ENCODE measurements at regions of chr13 and their contacts with region 1.

Region 1: DNA sequence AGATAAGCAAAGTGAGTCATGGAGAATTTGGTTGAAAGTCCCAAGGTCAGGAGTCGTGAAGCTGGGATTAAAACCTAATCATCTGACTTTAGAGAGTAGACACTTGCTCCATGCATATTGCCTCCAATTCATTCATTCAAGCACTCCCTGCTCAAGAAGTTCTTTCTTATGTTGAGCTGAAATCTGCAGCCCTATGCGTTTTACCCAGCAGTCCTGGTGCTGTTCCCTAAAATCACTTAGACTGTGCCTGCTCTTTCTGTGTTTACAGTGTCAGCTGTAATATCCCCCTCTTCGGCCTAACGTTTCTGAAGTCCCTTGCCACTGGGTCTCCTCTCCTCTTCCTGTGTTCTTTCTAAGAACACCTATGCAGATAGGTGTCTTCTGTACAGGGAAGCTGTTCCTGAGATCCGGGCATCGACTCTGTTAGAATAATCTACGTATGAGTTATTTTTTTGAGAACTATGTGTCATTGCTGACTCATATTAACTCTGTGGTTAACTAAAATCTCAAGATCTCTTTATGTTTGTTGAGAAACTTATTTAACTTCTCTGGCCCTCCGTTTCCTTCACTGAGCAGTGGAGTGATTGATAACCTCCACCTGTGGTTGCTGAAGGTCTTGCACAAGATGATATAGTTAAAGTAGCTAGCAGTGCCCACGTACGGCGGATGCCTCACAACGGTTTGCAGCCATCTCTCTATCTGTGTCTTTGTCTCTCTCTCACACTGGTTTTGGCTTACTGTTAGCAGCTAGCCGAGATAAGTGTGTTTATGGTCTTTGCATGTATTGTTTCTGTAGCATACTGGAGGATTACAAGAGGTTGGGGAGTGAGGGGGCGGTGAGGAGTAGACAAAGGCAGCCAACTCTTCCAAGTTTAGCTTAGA is 4.7 kb downstream of the ALOX5AP start:
- DNase-seq: peak; percentile 80
- H3K4me3 Mint-ChIP-seq: peak overlapping the region; percentile 73
- H3K27ac Mint-ChIP-seq: peak overlapping the region; percentile 88
- H3K4me1 Mint-ChIP-seq: peaks cover 78% of the 10 kb centered on the region
- H3K27me3 Mint-ChIP-seq: peaks cover 2% of the 10 kb centered on the region

Region 2: DNA sequence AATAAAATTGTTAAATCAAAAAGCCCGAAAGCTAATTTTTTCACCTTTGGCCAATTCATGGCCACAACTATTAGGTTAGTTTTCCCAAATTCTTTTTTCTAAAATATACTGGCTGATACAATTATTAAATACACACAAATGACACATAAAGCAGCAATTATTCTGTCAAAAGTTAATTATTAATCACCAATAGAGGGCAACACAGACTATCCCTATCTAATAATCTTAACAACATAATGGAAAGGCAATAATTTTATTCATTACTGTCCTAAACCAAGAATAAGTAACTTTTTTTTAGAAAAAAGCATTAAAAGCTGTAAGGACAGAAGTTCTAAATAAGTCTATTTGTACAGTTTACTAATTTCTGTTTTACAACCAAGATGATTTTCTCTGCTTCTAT is 484.3 kb before region 1 on chr13:
- CTCF ChIA-PET with region 1: no interaction called
- intact Hi-C with region 1: loop called (anchors 2 kb)
- DNase-seq: no peak
- H3K4me3 Mint-ChIP-seq: no peak overlapping the region
- H3K27ac Mint-ChIP-seq: no peak overlapping the region
- H3K4me1 Mint-ChIP-seq: peaks cover 20% of the 10 kb centered on the region
- H3K27me3 Mint-ChIP-seq: no peaks in the 10 kb centered on the region

Region 3: GRCh38 chr13:30429721-30430694 is 310.0 kb before region 1 on chr13:
- CTCF ChIA-PET with region 1: no interaction called
- intact Hi-C with region 1: loop called (anchors 1 kb)
- DNase-seq: peak; percentile 53
- H3K4me3 Mint-ChIP-seq: peak overlapping the region; percentile 47
- H3K27ac Mint-ChIP-seq: peak overlapping the region; percentile 82
- H3K4me1 Mint-ChIP-seq: peaks cover 29% of the 10 kb centered on the region
- H3K27me3 Mint-ChIP-seq: no peaks in the 10 kb centered on the region

Region 4: GRCh38 chr13:30673669-30674521 is 66.1 kb before region 1 on chr13:
- CTCF ChIA-PET with region 1: no interaction called
- intact Hi-C with region 1: loop called (anchors 1 kb)
- DNase-seq: peak; percentile 84
- H3K4me3 Mint-ChIP-seq: peak overlapping the region; percentile 82
- H3K27ac Mint-ChIP-seq: peak overlapping the region; percentile 41
- H3K4me1 Mint-ChIP-seq: peaks cover 8% of the 10 kb centered on the region
- H3K27me3 Mint-ChIP-seq: no peaks in the 10 kb centered on the region

Region 5: DNA sequence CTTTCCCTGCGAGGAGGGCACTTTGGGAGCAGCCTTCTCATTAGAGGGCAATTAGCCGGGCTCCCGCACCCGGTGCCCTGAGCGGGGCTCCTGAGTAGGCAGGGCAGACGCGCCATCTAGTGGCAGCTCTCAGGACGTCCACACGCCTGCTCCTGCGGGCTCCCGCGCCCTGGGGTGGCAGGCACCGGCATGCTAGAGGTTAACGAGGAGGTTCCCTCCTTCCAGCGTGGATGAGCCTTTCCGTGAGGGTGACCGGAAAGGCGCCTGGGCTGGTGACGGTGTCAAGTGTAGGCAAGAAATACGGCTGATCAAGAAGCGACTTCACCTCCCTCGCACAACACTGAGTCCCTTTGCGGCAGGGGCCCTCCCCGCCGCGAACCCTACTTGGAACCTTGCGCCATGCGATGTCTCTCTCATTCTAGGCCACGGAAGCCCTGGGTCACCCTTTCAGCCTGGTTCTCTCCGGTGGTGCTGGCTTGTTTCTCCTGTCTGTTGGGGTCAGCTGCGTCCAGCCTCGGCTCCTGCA is 63.0 kb after region 1 on chr13:
- CTCF ChIA-PET with region 1: interaction called, 3 read pairs
- intact Hi-C with region 1: loop called (anchors 1 kb)
- DNase-seq: peak; percentile 88
- H3K4me3 Mint-ChIP-seq: peak overlapping the region; percentile 38
- H3K27ac Mint-ChIP-seq: no peak overlapping the region
- H3K4me1 Mint-ChIP-seq: peaks cover 5% of the 10 kb centered on the region
- H3K27me3 Mint-ChIP-seq: no peaks in the 10 kb centered on the region

Region 6: GRCh38 chr13:31199849-31200636 is 460.0 kb after region 1 on chr13 and contains the start of gene B3GLCT:
- CTCF ChIA-PET with region 1: no interaction called
- intact Hi-C with region 1: loop called (anchors 5 kb)
- DNase-seq: peak; percentile 65
- H3K4me3 Mint-ChIP-seq: peak within 1 kb of the TSS; percentile 83
- H3K27ac Mint-ChIP-seq: peak within 1 kb of the TSS; percentile 68
- H3K4me1 Mint-ChIP-seq: peaks cover 26% of the 10 kb centered on the region
- H3K27me3 Mint-ChIP-seq: no peaks in the 10 kb centered on the region
- total RNA-seq, gene B3GLCT: 1.2 to 1.5 TPM